Thyroid gland (tissue), 4 donors: ENCODE measurements at regions of chr7 and their contacts with region 1.

Region 1: GRCh38 chr7:140003913-140004382 is 58.8 kb downstream of the PARP12 start:
- DNase-seq: peak; percentile 8 to 11
- H3K4me3 ChIP-seq: no peak overlapping the region
- H3K27ac ChIP-seq: no peak overlapping the region
- H3K4me1 ChIP-seq: no peaks in the 10 kb centered on the region
- H3K27me3 ChIP-seq: no peaks in the 10 kb centered on the region
- CTCF ChIP-seq: peak in 3 of 6 experiments; percentile 26 to 49 (median 30)
- POLR2A ChIP-seq: no peak

Region 2: DNA sequence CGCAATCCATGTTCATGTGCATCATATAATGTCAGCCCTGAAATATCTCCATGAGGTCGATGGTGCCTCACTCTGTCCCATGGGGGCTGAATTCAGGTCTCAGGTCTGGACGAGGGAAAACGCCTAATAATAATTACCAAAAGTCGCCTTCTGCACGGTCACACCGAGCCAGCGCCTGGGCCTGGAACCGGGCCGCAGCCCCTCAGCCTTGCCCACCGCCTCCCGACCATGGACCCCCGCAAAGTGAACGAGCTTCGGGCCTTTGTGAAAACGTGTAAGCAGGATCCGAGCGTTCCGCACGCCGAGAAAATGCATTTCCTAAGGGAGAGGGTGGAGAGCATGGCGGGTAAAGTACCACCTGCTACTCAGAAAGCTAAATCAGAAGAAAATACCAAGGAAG is 501.7 kb before region 1 on chr7:
- intact Hi-C with region 1: loop called (anchors 5 kb)
- DNase-seq: no peak
- H3K4me3 ChIP-seq: no peak overlapping the region
- H3K27ac ChIP-seq: no peak overlapping the region
- H3K4me1 ChIP-seq: no peaks in the 10 kb centered on the region
- H3K27me3 ChIP-seq: no peaks in the 10 kb centered on the region
- CTCF ChIP-seq: no peak
- POLR2A ChIP-seq: no peak

Region 3: GRCh38 chr7:139645572-139646523 is 358.1 kb before region 1 on chr7:
- intact Hi-C with region 1: loop called (anchors 5 kb)
- DNase-seq: peak; percentile 85 to 94
- H3K4me3 ChIP-seq: no peak overlapping the region
- H3K27ac ChIP-seq: no peak overlapping the region
- H3K4me1 ChIP-seq: peaks cover 0 to 15% of the 10 kb centered on the region in 2 donors
- H3K27me3 ChIP-seq: no peaks in the 10 kb centered on the region
- CTCF ChIP-seq: peak; percentile 87 to 94 (median 92)
- POLR2A ChIP-seq: no peak

Region 4: GRCh38 chr7:139777948-139778841 is 225.8 kb before region 1 on chr7 and contains the start of gene HIPK2:
- intact Hi-C with region 1: loop called (anchors 5 kb)
- DNase-seq: peak; percentile 79 to 83
- H3K4me3 ChIP-seq: peak within 1 kb of the TSS; percentile 56 to 89 (median 64)
- H3K27ac ChIP-seq: peak within 1 kb of the TSS; percentile 44 to 95 (median 94)
- H3K4me1 ChIP-seq: peaks cover 6 to 21% of the 10 kb centered on the region in 2 donors
- H3K27me3 ChIP-seq: no peaks in the 10 kb centered on the region
- CTCF ChIP-seq: no peak
- POLR2A ChIP-seq: peak in 1 of 2 donors; percentile 9
- total RNA-seq, gene HIPK2: 31.3 to 58.5 (median 41.0) TPM

Region 5: GRCh38 chr7:140121326-140121725 is 117.4 kb after region 1 on chr7:
- intact Hi-C with region 1: no loop called
- DNase-seq: peak; percentile 44 to 50
- H3K4me3 ChIP-seq: no peak overlapping the region
- H3K27ac ChIP-seq: no peak overlapping the region
- H3K4me1 ChIP-seq: peaks cover 8 to 11% of the 10 kb centered on the region in 2 donors
- H3K27me3 ChIP-seq: no peaks in the 10 kb centered on the region
- CTCF ChIP-seq: no peak
- POLR2A ChIP-seq: no peak